Gastrocnemius medialis (tissue), 4 donors: ENCODE measurements at regions of chr12 and their contacts with region 1.

Region 1: GRCh38 chr12:67457778-67458177 is 188.6 kb downstream of the CAND1 start:
- DNase-seq: no peak
- ATAC-seq: peak in 1 of 2 donors; percentile 35
- H3K4me3 ChIP-seq: no peak overlapping the region
- H3K27ac ChIP-seq: peak overlapping the region; percentile 8 to 45 (median 26)
- H3K4me1 ChIP-seq: peaks cover 44 to 50% of the 10 kb centered on the region in 2 donors
- H3K27me3 ChIP-seq: no peaks in the 10 kb centered on the region
- CTCF ChIP-seq: peak in 2 of 5 experiments; percentile 13 to 34
- POLR2A ChIP-seq: no peak

Region 2: GRCh38 chr12:67630373-67631088 is 172.8 kb after region 1 on chr12:
- in situ Hi-C with region 1: loop called in 1 of 4 experiments (anchors 10 kb)
- intact Hi-C with region 1: no loop called
- DNase-seq: peak in 1 of 2 donors; percentile 15
- ATAC-seq: no peak
- H3K4me3 ChIP-seq: no peak overlapping the region
- H3K27ac ChIP-seq: no peak overlapping the region
- H3K4me1 ChIP-seq: no peaks in the 10 kb centered on the region
- H3K27me3 ChIP-seq: no peaks in the 10 kb centered on the region
- CTCF ChIP-seq: no peak
- POLR2A ChIP-seq: no peak